Adrenal gland (tissue), 19 donors: ENCODE measurements at regions of chr17 and their contacts with region 1.

Region 1: DNA sequence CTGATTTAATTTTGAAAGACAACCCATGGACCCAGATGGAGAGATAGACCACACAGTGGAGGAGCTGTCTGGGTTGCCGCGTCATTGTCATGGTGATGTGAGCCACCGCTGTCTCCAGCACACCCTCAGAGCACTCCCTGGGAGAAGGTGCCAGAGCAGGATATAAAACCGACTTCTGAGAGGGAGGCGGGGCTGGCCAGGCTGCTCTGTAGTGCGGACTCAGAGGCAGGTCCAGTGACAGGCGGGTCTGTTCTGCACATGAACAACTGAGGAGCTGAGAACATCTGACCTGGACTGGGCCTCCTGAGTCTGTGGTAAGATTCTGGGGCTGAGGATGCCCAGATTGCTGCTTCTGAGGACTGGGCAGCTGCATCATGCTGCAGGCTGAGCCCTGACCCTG is 216.4 kb upstream of the NLRP1 start:
- DNase-seq: peak in 1 of 7 donors; percentile 55
- H3K4me3 ChIP-seq: no peak overlapping the region
- H3K27ac ChIP-seq: no peak overlapping the region
- H3K4me1 ChIP-seq: no peaks in the 10 kb centered on the region
- H3K27me3 ChIP-seq: peaks cover 6% of the 10 kb centered on the region
- CTCF ChIP-seq: no peak
- POLR2A ChIP-seq: no peak

Region 2: DNA sequence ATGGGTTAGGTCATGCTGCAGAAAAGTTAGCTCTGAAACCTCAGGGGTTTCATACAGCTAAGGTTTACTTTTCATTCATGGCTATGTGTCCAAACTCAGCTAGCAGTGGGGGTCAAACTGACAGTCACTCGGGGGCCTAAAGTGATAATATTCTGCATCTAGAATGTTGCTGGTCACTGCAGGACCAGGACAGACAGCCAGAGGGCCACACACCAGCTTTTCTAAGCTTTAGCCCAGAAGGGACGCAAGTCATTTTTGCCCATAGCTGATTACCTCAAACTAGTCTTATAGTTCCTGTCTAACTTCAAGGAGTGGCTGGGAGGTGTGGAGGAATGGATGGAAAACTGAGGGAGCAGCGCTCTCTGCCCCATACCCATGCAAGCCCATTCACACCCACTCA is 53.4 kb before region 1 on chr17:
- intact Hi-C with region 1: loop called in 1 of 2 experiments (anchors 10 kb)
- DNase-seq: no peak
- H3K4me3 ChIP-seq: no peak overlapping the region
- H3K27ac ChIP-seq: no peak overlapping the region
- H3K4me1 ChIP-seq: no peaks in the 10 kb centered on the region
- H3K27me3 ChIP-seq: no peaks in the 10 kb centered on the region
- CTCF ChIP-seq: no peak
- POLR2A ChIP-seq: no peak

Region 3: GRCh38 chr17:6279659-6280058 is 479.0 kb after region 1 on chr17:
- intact Hi-C with region 1: no loop called
- DNase-seq: no peak
- H3K4me3 ChIP-seq: no peak overlapping the region
- H3K27ac ChIP-seq: no peak overlapping the region
- H3K4me1 ChIP-seq: no peaks in the 10 kb centered on the region
- H3K27me3 ChIP-seq: no peaks in the 10 kb centered on the region
- CTCF ChIP-seq: no peak
- POLR2A ChIP-seq: no peak